ENCODE measurements at regions of chr1 and their contacts with region 1.

Region 1: DNA sequence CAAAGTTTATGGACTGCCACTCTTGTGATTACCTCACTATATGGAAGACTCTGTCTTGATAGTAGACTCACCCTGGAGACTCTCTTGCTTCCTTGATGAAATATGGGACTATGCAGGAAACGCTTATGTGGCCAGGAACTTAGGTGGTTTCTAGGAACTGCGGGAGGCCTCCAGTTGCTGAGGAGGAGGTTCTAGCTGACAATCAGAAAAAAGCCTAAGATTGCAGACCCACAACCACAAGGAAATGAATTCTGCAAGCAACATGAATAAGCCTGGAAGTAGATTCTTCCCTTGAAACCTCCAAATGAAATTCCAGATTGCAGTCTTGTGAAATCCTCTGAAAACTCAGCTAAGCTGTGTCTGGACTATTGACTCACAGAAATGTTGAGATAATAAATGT is 88.9 kb upstream of the COL11A1 start:
- DNase-seq: no peak
- ATAC-seq: no peak

Region 2: GRCh38 chr1:103327054-103327719 is 130.0 kb after region 1 on chr1:
- intact Hi-C with region 1: no loop called
- DNase-seq: no peak
- ATAC-seq: no peak

Region 3: DNA sequence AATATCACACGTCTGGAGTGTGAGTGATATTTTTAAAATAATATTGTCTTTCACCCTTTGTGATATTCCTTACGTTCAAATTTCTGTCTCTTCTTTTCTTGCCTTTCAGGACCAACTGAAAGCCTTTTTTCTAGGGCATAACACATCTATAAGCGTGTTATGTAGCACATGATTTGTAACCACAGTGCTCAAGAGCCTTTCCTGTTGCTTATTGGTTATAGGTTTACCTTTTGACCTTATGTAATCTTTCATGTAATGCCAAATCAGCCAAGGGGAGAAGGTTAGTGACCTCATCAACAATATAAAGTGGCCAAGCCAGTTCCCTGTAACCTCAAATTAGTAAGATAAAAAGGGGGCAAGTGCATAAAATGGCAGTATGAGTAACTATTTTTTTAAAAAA is 1032.6 kb after region 1 on chr1:
- intact Hi-C with region 1: loop called (anchors 10 kb)
- DNase-seq: no peak
- ATAC-seq: no peak

Measured in sciatic nerve (tissue), 2 donors.